ENCODE measurements at regions of chr5 and their contacts with region 1.

Region 1: DNA sequence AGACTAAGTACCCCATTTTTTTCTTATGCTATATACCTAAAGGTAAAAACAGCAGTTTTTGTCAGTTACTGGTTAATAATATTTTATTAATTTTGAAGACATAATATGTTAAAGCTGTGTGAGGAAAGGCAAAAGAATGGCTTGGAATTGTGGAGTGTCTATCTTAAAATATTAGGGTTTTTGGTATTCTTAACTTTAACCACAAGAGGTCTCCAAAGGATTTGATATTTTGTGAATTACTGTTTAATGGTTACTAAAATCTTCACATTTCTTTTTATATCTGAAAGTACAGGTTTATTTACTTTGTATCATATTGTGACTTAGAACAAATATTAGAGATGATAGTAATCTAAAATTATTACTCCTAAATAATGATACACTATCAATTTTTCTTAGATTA is 32.0 kb upstream of the DHFR start:
- DNase-seq: no peak
- H3K4me3 ChIP-seq: no peak overlapping the region
- H3K27ac ChIP-seq: no peak overlapping the region
- H3K4me1 ChIP-seq: no peaks in the 10 kb centered on the region
- H3K27me3 ChIP-seq: no peaks in the 10 kb centered on the region
- CTCF ChIP-seq: peak; percentile 42

Region 2: DNA sequence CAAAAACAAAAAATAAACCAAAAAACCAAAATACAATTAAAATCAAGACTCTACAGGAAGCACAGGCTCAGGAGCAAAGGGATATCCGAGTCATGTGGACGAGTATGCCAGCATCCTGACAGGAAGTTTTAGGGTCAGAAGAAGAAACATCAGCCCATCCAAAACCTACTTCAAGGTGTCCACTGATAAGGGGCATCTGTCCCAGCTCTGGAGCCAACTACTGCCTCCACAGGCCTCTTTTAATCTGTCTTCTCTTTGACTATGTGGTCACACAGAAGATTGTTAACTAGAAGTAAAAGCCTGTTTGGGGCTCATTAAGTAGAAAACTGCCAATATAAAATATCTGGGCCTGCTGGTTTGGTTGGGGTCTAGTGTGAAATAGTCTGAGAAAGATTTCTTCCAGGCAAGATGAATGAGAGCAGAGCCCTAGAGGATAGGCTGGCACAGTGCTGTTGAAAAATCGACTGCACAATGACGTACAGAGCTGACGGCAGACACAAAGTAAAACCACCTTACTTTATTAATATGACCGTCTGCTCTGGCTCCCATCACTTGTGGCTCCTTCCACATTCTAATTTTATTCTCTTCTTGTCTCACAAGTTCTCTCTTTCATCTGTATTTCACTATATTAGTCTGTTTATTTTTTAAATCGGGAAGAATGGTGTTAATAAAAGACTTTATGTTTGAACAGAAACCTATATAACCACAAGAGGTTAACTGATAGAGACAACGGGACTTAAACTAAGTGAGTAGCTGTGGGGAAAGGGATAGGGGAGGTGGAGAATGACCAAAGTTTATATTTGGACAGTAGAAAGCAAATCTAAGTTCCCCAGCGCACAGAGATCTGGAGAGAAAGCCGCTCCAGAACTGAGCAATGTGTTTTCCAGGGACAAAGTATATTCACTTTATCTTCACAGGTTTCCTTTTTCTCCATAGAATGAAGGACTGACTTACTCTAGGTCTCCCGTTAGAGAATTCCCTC is 55.2 kb before region 1 on chr5:
- intact Hi-C with region 1: no loop called
- DNase-seq: no peak
- H3K4me3 ChIP-seq: no peak overlapping the region
- H3K27ac ChIP-seq: no peak overlapping the region
- H3K4me1 ChIP-seq: no peaks in the 10 kb centered on the region
- H3K27me3 ChIP-seq: no peaks in the 10 kb centered on the region
- CTCF ChIP-seq: no peak

Region 3: GRCh38 chr5:80825786-80826460 is 139.2 kb after region 1 on chr5:
- intact Hi-C with region 1: no loop called
- DNase-seq: no peak
- H3K4me3 ChIP-seq: no peak overlapping the region
- H3K27ac ChIP-seq: no peak overlapping the region
- H3K4me1 ChIP-seq: peaks cover 11% of the 10 kb centered on the region
- H3K27me3 ChIP-seq: no peaks in the 10 kb centered on the region
- CTCF ChIP-seq: no peak

Region 4: DNA sequence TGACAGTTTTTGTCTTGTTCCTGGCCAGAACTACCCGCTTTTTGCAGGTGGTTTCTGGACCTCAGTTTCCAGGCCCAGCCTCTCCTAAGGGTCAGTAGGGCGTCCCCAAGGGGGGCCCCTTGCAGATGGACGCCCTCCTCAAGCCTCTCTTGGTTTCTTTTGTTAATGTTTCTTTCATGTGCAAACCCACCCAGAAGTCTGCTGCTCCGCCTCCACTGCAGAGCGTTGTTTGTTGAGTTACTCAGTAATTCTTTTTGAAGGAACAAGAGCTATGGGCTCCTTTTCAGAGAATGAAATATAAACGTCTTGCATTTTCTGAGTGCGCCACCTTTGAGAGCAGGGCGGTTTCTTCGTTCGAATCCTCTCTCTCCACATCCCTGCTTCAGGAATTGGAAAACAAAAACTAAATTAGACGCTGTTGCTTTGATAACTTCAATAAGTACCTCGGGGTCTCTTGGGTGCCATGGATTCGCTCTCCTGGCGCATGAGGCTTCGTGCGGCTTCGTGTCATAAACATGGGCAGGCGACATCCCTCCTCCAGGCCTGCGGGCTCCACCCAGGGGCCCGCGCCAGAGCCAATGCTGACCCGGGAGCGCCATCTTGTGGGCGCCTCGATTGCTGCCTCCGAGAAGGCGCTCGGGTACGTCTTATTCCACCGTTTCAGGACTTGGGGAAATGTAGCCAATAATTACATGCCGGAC is 508.0 kb after region 1 on chr5:
- intact Hi-C with region 1: loop called (anchors 10 kb)
- DNase-seq: peak; percentile 83
- H3K4me3 ChIP-seq: peak overlapping the region; percentile 15
- H3K27ac ChIP-seq: no peak overlapping the region
- H3K4me1 ChIP-seq: peaks cover 17% of the 10 kb centered on the region
- H3K27me3 ChIP-seq: no peaks in the 10 kb centered on the region
- CTCF ChIP-seq: peak; percentile 97